Natural killer cell (primary cell): ENCODE measurements at regions of chr2 and their contacts with region 1.

Region 1: GRCh38 chr2:112764071-112765044 is at the start of gene CKAP2L:
- DNase-seq: peak; percentile 95 to 98
- ATAC-seq: peak; percentile 98 to 100 (median 99)
- H3K4me3 ChIP-seq: peak within 1 kb of the TSS; percentile 53
- H3K4me3 Mint-ChIP-seq: peak within 1 kb of the TSS; percentile 98
- H3K27ac ChIP-seq: peak within 1 kb of the TSS; percentile 26
- H3K27ac Mint-ChIP-seq: peak within 1 kb of the TSS; percentile 85 to 92
- H3K4me1 ChIP-seq: peaks cover 17% of the 10 kb centered on the region
- H3K4me1 Mint-ChIP-seq: peaks cover 31 to 35% of the 10 kb centered on the region in 2 donors
- H3K27me3 ChIP-seq: no peaks in the 10 kb centered on the region
- H3K27me3 Mint-ChIP-seq: no peaks in the 10 kb centered on the region
- CTCF ChIP-seq: no peak
- total RNA-seq, gene CKAP2L: 1.2 to 3.4 (median 1.2) TPM

Region 2: GRCh38 chr2:112794131-112794733 is 29.9 kb after region 1 on chr2:
- intact Hi-C with region 1: loop called (anchors 1 kb)
- DNase-seq: peak; percentile 25 to 45
- ATAC-seq: peak; percentile 95 to 100 (median 98)
- H3K4me3 ChIP-seq: no peak overlapping the region
- H3K4me3 Mint-ChIP-seq: no peak overlapping the region
- H3K27ac ChIP-seq: peak overlapping the region; percentile 25
- H3K27ac Mint-ChIP-seq: peak overlapping the region; percentile 56 to 85
- H3K4me1 ChIP-seq: no peaks in the 10 kb centered on the region
- H3K4me1 Mint-ChIP-seq: peaks cover 18 to 27% of the 10 kb centered on the region in 2 donors
- H3K27me3 ChIP-seq: no peaks in the 10 kb centered on the region
- H3K27me3 Mint-ChIP-seq: no peaks in the 10 kb centered on the region
- CTCF ChIP-seq: no peak